ENCODE measurements at regions of chr15 and their contacts with region 1.

Region 1: GRCh38 chr15:41116116-41116871 is at the start of gene INO80:
- DNase-seq: peak; percentile 96
- ATAC-seq: peak; percentile 87
- H3K4me3 ChIP-seq: peak within 1 kb of the TSS; percentile 89 to 100 (median 98)
- H3K27ac ChIP-seq: peak within 1 kb of the TSS; percentile 98
- H3K4me1 ChIP-seq: peaks cover 27% of the 10 kb centered on the region
- H3K27me3 ChIP-seq: no peaks in the 10 kb centered on the region; a peak in 1 of 5 replicates
- CTCF ChIP-seq: no peak
- EP300 ChIP-seq: peak; percentile 16 to 67; a peak in 3 of 4 replicates
- POLR2A ChIP-seq: peak; percentile 73 to 96
- RAD21 ChIP-seq: peak; percentile 35; the same call in 1 of the 2 replicates
- total RNA-seq, gene INO80: 14.8 and 18.5 TPM in 2 replicates

Region 2: DNA sequence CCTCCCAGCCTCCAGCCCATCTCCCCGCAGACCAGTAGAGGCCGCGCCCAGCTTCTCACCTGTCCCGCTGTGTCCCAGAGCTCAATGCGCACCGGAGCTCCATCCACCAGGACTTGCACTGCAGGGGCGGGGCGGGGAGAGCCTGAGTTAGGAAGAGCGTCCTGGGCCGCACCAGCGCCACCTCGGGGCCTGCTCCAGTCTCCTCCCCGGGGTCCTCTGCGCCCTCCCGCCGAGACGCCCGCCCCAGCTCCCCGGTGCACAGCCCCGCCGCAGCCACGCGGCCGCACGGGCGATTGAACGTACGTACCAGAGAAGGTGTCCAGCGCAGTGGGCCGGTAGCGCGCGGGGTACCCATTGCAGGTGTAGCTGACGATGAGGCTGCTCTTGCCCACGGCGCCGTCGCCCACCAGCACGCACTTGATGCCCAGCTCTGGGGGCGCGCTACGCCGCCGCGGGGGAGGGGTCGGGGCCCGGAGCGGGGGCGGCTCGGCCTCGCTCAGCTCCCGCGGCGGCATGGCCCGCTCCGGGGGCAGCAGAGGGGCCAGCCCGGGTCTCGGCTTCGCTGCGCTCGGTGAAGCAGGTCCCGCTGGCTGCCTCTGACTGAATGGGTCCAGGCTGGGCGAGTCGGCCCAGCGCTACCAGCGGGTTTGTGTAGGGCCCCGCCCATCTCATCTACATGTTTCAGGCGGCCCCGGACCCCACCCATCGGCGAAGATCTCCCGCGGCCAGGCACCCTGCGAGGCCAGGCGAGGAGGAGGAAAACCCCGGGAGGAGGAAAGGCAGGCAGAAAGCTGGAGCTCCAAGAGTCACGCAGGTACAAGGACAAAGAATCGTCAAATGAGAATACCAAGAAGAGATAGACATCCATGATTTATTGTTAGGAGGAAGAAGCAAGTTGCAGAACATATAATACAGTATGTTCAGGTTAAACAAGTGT is 242.4 kb before region 1 on chr15 and contains the start of gene RHOV:
- CTCF ChIA-PET with region 1: no interaction called
- POLR2A ChIA-PET with region 1: no interaction called
- in situ Hi-C with region 1: no loop called
- intact Hi-C with region 1: no loop called
- DNase-seq: peak; percentile 62
- ATAC-seq: peak; percentile 91
- H3K4me3 ChIP-seq: peak within 1 kb of the TSS; percentile 53 to 75 (median 62)
- H3K27ac ChIP-seq: no peak within 1 kb of the TSS
- H3K4me1 ChIP-seq: peaks cover 25% of the 10 kb centered on the region
- H3K27me3 ChIP-seq: peaks cover 0 to 27% of the 10 kb centered on the region in 2 experiments; a peak in 2 of 5 replicates
- CTCF ChIP-seq: peak; percentile 66
- EP300 ChIP-seq: no peak
- POLR2A ChIP-seq: no peak
- RAD21 ChIP-seq: no peak; the same call in 1 of the 2 replicates
- total RNA-seq, gene RHOV: 0.15 and 0.18 TPM in 2 replicates

Region 3: DNA sequence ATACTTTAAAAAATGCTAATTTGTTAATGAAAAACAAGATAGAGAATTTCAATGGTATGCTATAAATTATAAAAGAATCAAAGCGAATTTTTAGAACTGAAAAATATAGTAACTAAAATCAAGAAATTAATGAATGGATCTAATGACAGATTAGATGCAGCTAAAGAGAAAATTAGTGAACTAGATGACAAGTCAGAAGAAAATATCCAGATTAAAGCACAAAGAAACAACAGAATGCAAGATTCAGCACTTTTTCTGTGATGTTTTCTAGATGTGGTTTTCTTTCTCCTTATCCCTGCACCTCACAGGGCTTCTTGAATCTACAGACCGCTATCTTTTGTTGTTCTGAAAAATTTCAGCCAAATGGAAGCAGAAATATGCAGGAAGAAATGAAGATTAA is 54.6 kb before region 1 on chr15:
- CTCF ChIA-PET with region 1: no interaction called
- POLR2A ChIA-PET with region 1: no interaction called
- in situ Hi-C with region 1: no loop called
- intact Hi-C with region 1: loop called (anchors 2 kb)
- DNase-seq: no peak
- ATAC-seq: no peak
- H3K4me3 ChIP-seq: no peak overlapping the region
- H3K27ac ChIP-seq: no peak overlapping the region
- H3K4me1 ChIP-seq: no peaks in the 10 kb centered on the region
- H3K27me3 ChIP-seq: no peaks in the 10 kb centered on the region
- CTCF ChIP-seq: no peak
- EP300 ChIP-seq: no peak
- POLR2A ChIP-seq: no peak
- RAD21 ChIP-seq: no peak

Measured in HepG2 (cell line).